Gastrocnemius medialis (tissue), 4 donors: ENCODE measurements at regions of chr11 and their contacts with region 1.

Region 1: DNA sequence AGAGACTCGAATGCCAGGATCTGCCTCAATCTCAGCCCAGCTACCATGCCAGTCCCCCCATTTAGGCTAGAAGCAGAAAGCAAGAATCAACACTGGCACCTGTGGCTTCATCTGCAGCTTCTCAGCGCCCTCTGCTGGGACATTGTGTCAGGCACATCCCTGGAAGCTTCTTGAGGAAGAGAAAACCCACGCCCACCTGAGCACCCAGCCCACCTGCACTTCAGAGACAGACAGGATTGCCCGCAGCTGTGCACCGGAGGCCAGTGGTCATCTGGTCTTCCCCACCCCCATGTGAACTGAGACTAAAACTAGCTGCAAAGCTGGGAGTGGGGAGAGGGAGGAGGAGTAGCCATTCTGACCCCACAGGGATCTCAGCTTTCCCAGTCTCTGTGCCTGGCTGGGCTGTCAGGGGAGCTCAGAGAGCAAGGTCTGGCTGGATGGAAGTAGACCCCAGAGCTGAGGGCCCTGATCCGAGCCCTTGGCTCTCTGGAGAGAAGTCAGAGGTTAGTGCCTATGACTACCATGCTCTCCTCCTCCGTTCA is 66.8 kb downstream of the FEZ1 start:
- DNase-seq: peak; percentile 42 to 72
- ATAC-seq: peak in 1 of 2 donors; percentile 16
- H3K4me3 ChIP-seq: no peak overlapping the region
- H3K27ac ChIP-seq: peak overlapping the region; percentile 24 to 49 (median 39)
- H3K4me1 ChIP-seq: peaks cover 63 to 69% of the 10 kb centered on the region in 2 donors
- H3K27me3 ChIP-seq: no peaks in the 10 kb centered on the region
- CTCF ChIP-seq: peak; percentile 67 to 81 (median 74)
- POLR2A ChIP-seq: no peak

Region 2: GRCh38 chr11:124961972-124962609 is 467.1 kb before region 1 on chr11:
- in situ Hi-C with region 1: no loop called
- intact Hi-C with region 1: loop called (anchors 2 kb)
- DNase-seq: no peak
- ATAC-seq: peak; percentile 75 to 90
- H3K4me3 ChIP-seq: no peak overlapping the region
- H3K27ac ChIP-seq: no peak overlapping the region
- H3K4me1 ChIP-seq: no peaks in the 10 kb centered on the region
- H3K27me3 ChIP-seq: no peaks in the 10 kb centered on the region
- CTCF ChIP-seq: peak in 4 of 5 experiments; percentile 58 to 71 (median 60)
- POLR2A ChIP-seq: no peak

Region 3: GRCh38 chr11:125111343-125112207 is 317.7 kb before region 1 on chr11 and contains the start of gene TMEM218:
- in situ Hi-C with region 1: no loop called
- intact Hi-C with region 1: loop called (anchors 5 kb)
- DNase-seq: peak; percentile 99
- ATAC-seq: peak; percentile 98 to 99
- H3K4me3 ChIP-seq: peak within 1 kb of the TSS; percentile 86 to 97 (median 92)
- H3K27ac ChIP-seq: peak within 1 kb of the TSS; percentile 82 to 86 (median 84)
- H3K4me1 ChIP-seq: peaks cover 11 to 15% of the 10 kb centered on the region in 2 donors
- H3K27me3 ChIP-seq: peaks cover 0 to 3% (median 0%) of the 10 kb centered on the region in 3 donors
- CTCF ChIP-seq: no peak
- POLR2A ChIP-seq: no peak
- total RNA-seq, gene TMEM218: 6.3 to 11.2 (median 9.4) TPM

Region 4: DNA sequence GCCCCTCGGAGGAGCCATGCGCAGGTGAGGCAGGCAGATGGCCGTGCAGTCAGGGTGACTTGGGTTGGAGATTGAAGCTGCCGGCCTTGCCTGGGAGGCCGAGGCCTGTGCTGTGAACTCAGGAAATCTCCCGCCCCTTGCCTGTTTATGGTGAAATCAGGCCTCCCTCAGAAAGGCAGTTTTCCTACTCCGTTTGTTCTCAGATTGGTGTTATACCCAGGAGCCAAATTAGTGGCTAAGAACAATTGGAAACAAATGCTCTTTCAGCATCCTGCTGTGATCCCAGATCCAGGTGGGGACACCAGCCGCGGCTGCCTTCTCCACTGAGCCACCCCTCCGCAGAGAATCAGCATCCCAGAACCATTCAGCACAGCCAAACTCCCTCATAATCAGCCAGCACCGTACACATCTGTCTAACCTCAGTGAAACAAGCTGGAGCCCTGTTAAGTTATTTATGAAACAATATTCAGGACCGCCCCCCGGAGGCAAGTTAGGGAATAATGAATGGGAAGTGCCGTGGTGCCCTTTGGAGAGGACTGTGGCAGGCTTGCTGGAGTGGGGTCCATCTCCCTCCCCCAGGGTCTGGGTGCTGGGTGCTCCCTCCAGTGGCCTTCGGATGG is 204.7 kb before region 1 on chr11:
- in situ Hi-C with region 1: no loop called
- intact Hi-C with region 1: loop called (anchors 5 kb)
- DNase-seq: no peak
- ATAC-seq: no peak
- H3K4me3 ChIP-seq: no peak overlapping the region
- H3K27ac ChIP-seq: peak overlapping the region; percentile 56 to 75 (median 70)
- H3K4me1 ChIP-seq: peaks cover 40 to 46% of the 10 kb centered on the region in 2 donors
- H3K27me3 ChIP-seq: no peaks in the 10 kb centered on the region
- CTCF ChIP-seq: peak in 2 of 5 experiments; percentile 11 to 16
- POLR2A ChIP-seq: no peak

Region 5: DNA sequence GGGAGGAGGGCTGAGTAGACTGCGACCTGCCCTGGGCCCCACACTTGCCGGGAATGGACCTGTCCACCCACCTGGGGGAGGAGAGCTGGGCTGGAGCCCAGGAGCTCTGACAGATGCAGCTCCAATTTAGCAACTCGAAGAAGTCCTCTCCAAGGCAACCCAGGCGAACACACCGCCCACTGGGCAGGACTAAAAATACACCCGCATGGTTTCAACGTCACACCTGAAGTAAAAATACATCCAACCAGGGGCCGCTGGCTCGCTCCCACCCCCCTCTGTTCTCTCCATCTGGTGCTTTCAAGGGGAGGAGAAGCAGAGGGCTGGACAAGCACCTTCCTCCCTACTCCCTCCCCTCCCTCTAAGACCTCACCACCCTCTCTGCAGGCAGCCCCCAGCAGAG is 53.1 kb before region 1 on chr11:
- in situ Hi-C with region 1: no loop called
- intact Hi-C with region 1: loop called (anchors 1 kb)
- DNase-seq: peak; percentile 89 to 96
- ATAC-seq: peak; percentile 83 to 84
- H3K4me3 ChIP-seq: peak overlapping the region in 1 of 4 donors; percentile 3
- H3K27ac ChIP-seq: peak overlapping the region; percentile 78 to 93 (median 90)
- H3K4me1 ChIP-seq: peaks cover 53 to 57% of the 10 kb centered on the region in 2 donors
- H3K27me3 ChIP-seq: no peaks in the 10 kb centered on the region
- CTCF ChIP-seq: no peak
- POLR2A ChIP-seq: peak in 1 of 2 donors; percentile 77

Region 6: GRCh38 chr11:125542709-125543108 is 113.5 kb after region 1 on chr11:
- in situ Hi-C with region 1: no loop called
- intact Hi-C with region 1: no loop called
- DNase-seq: no peak
- ATAC-seq: no peak
- H3K4me3 ChIP-seq: no peak overlapping the region
- H3K27ac ChIP-seq: no peak overlapping the region
- H3K4me1 ChIP-seq: no peaks in the 10 kb centered on the region
- H3K27me3 ChIP-seq: no peaks in the 10 kb centered on the region
- CTCF ChIP-seq: no peak
- POLR2A ChIP-seq: no peak